GM10248 (cell line): ENCODE measurements at regions of chr12 and their contacts with region 1.

Region 1: DNA sequence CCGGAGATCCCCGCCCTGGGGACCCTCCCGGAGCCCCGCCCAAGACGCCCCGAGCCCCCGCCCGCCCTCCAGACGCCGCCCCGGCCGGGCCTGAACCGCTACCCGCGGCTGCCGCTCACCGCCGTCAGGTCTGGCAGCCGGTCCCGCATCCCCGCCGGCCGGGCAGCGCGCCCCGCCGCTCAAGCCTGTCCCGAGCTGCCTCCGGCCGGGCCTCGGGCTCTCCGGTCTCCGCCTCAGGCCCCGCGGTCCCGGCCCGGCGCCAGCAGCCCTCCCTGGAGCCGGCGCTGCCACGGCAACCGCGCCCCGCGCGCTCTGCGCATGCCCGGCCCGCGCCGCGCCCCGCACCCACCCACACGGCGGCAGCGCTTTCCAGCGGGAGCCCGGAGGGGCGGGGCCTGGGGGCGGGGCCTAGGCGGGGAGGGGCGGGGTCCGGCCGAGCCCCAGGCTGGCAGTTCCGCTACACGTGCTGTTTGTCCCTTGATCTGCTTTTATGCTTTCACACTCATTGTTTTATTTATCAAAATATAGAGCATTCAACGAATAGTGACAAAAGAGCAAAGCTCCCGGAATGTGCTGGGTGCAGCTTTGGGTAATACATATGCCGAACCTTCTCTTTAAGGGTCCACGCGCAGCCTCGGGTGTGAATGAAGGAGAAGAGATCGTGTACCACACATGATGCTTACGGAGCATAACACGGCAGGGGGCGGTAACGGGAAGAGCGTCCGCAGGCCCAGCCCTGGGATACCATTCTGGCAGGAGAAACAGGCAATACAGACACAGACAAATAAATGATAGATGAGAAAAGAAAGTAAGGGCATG is at the start of gene STX2:
- DNase-seq: peak; percentile 97
- CTCF ChIP-seq: peak; percentile 6

Region 2: DNA sequence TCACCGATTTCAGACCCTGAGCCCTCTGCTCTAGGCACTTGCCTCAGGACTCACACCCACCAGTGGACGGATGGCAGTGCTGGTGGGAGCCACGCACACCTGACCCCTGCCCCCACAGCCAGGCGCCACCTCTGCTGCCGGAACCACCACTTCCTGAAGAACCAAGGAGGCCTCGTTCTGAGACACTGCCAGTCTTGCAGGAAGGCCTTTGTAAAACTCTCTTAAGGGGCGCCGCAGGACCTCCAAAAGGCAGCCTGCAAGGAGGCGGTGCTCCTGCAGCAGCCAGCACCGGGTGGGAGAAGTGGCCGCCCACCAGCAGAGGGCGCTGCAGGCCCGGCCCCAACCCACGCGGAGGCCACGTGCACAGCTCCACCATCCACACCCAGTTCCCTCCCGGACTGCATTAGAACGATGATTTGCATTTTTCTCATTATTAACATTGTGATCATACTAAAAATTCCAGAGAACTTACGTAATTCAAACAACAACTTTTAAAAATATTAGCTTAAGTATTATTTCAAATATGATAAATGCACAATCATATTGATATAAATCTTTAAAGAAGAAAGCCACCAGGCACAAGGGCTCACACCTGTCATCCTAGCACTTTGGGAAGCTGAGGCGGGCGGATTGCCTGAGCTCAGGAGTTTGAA is 12.9 kb before region 1 on chr12:
- CTCF ChIA-PET with region 1: interaction called, 36 read pairs
- POLR2A ChIA-PET with region 1: no interaction called
- DNase-seq: peak; percentile 53
- CTCF ChIP-seq: peak; percentile 51

Region 3: DNA sequence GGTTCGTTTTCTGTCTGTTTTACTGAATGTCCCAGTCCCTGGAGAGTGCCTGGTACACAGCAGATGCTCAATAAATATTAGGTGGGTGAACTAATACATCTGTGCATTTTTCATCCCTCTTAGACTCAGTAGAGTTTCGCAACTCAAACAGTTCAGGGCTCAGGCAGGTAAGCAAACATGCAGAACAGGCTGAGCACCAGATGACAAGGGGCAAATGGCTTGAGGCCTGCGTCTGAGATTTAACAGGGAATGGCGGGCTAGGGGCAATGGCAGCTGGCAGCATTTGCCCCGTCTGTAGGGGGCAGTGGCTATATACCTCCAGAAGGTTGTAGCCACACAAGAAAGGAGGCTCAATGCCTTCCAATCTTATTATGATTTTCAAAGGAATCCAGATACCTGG is 24.1 kb after region 1 on chr12:
- CTCF ChIA-PET with region 1: no interaction called
- POLR2A ChIA-PET with region 1: no interaction called
- DNase-seq: no peak
- CTCF ChIP-seq: no peak

Region 4: DNA sequence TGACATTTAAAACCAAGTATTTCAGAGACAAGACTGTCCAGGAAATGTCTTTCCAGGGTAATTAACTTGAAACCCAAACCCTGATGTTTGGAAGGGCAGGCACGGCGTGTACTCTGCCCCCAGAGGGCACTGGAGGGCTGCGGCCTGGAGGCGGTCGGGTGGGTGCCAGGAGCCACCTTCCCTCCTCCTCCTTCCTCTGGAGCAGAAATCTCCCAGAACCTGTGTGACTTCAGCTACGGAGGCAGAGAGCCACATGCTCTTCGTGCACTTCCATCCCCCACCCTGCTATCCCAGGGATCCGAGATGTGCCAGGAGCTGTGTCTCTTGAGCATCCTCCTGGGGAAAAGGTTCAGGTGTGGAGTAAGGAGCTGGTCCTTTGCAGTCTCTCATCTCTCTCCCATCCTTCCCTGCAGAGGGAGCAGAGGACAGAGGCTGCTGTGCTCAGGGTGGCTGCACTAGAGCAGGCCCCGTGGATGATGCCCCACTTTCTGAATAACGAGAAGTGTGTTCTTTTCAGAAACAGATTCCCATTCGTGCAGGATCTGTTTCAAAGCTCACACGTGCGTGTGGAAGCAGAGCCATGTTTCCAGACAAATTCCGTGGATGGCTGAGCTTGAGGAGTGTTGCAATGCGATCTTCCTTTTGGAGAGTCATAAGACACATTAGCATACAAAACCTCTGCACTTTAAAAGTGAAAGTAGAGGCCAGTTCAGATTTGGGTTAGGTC is 277.4 kb after region 1 on chr12:
- CTCF ChIA-PET with region 1: no interaction called
- POLR2A ChIA-PET with region 1: no interaction called
- DNase-seq: no peak
- CTCF ChIP-seq: peak; percentile 28